ENCODE measurements at regions of chr19 and their contacts with region 1.

Region 1: GRCh38 chr19:54245936-54246335 is 3.3 kb upstream of the LILRA6 start:
- DNase-seq: no peak
- ATAC-seq: no peak
- H3K4me3 ChIP-seq: no peak overlapping the region
- H3K27ac ChIP-seq: no peak overlapping the region
- H3K4me1 ChIP-seq: no peaks in the 10 kb centered on the region
- H3K27me3 ChIP-seq: 0 out of 2 replicates have a peak, but pooled peaks cover 3% of the 10 kb centered on the region
- CTCF ChIP-seq: no peak

Region 2: DNA sequence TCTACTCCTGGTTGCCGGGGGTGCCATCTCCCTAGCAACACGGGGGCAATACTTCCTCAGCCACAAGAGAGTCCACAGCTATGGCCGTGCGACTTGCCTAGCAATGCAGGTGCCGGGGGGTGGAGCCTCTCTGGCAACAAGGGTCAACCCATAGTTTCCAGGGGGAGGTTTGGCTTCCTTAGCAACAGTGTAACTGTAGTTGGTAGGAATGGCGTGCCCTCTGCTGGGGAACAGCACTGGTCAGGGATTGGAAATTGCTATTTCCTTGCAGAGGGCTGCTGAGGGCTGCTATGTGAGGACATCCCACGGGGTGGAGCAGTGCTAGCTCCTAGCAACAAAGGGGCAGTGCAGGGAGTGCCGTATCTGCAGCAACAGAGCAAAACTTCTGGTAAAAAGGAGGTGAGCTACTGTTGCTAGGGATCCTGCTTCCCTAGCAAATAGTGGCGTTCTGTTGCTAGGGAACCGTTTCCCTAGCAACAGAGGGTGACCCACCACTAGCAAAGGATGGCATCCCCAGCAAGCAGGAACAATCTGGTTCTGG is 65.9 kb before region 1 on chr19:
- CTCF ChIA-PET with region 1: no interaction called
- POLR2A ChIA-PET with region 1: no interaction called
- in situ Hi-C with region 1: no loop called
- intact Hi-C with region 1: no loop called
- DNase-seq: no peak
- ATAC-seq: peak; percentile 72
- H3K4me3 ChIP-seq: no peak overlapping the region
- H3K27ac ChIP-seq: no peak overlapping the region
- H3K4me1 ChIP-seq: no peaks in the 10 kb centered on the region
- H3K27me3 ChIP-seq: no peaks in the 10 kb centered on the region
- CTCF ChIP-seq: no peak

Region 3: DNA sequence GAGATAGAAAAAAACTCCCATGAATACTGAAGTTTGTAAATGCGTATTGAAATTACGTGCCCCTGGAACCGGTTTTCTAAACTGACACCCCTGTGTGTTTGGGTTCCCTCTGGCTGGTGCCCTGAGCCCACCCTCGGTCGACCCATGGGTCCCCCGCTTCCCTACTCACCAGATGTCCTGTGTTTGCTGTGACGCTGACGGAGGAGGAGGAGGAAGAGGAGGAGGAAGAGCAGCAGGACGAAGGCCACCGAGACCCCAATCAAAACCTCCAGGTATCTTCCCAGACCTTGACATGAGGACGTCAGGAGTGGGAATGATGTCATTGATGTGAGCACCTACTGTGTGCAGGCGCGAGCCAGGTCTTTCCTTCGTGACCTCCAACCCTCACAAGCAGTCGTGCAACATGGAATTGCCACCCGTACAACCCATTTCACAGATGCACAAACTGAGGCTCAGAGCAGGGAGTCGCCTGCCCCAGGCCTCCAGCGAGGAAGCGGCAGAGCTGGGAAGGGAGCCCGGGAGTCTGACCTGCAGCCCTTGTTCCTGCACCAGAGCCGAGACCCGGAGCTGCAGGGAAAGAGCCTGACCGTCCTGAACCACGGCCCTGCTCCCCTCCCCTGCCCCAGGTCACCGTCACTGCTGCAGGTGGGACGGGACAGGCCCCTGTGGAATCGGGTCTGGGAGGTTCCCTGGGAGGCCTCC is 26.8 kb before region 1 on chr19:
- CTCF ChIA-PET with region 1: no interaction called
- POLR2A ChIA-PET with region 1: no interaction called
- in situ Hi-C with region 1: no loop called
- intact Hi-C with region 1: loop called (anchors 2 kb)
- DNase-seq: no peak
- ATAC-seq: no peak
- H3K4me3 ChIP-seq: no peak overlapping the region
- H3K27ac ChIP-seq: no peak overlapping the region
- H3K4me1 ChIP-seq: peaks cover 5% of the 10 kb centered on the region; the same call in 1 of the 2 replicates
- H3K27me3 ChIP-seq: no peaks in the 10 kb centered on the region
- CTCF ChIP-seq: no peak